GM18951 (cell line): ENCODE measurements at regions of chr5 and their contacts with region 1.

Region 1: GRCh38 chr5:1174122-1174936 is 27.1 kb upstream of the SLC6A19 start:
- POLR2A ChIP-seq: no peak

Region 2: GRCh38 chr5:1118231-1118698 is 56.1 kb before region 1 on chr5:
- in situ Hi-C with region 1: no loop called
- POLR2A ChIP-seq: no peak

Region 3: GRCh38 chr5:1641560-1642166 is 467.3 kb after region 1 on chr5:
- in situ Hi-C with region 1: loop called (anchors 10 kb)
- POLR2A ChIP-seq: no peak